GM10248 (cell line): ENCODE measurements at regions of chr6 and their contacts with region 1.

Region 1: DNA sequence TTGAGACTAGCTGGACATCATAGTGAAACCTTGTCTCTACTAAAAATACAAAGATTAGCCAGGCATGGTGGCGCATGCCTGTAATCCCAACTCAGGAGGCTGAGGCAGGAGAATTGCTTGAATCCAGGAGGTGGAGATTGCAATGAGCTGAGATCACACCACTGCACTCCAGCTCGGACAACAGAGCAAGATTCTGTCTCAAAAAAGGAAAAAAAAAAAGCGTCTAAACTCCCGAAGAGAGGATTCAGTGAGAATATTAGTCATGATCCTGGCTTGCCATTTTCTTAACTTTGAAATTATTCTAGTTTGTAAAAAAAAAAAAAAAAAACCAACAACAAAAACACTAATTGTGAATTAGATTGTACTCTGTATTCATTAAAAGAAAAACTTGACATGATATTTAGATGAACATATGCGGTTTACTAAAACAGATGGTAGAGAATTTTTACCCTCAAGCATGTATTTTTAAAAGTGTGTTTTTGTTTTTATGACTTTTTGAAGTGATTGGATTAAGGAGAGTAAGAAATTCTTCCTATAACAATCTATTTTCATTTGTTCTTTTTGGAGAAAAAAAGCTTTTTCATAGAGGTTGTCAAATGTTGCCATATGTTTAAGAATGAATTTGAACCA is 80.7 kb downstream of the UST start:
- DNase-seq: no peak
- CTCF ChIP-seq: no peak

Region 2: DNA sequence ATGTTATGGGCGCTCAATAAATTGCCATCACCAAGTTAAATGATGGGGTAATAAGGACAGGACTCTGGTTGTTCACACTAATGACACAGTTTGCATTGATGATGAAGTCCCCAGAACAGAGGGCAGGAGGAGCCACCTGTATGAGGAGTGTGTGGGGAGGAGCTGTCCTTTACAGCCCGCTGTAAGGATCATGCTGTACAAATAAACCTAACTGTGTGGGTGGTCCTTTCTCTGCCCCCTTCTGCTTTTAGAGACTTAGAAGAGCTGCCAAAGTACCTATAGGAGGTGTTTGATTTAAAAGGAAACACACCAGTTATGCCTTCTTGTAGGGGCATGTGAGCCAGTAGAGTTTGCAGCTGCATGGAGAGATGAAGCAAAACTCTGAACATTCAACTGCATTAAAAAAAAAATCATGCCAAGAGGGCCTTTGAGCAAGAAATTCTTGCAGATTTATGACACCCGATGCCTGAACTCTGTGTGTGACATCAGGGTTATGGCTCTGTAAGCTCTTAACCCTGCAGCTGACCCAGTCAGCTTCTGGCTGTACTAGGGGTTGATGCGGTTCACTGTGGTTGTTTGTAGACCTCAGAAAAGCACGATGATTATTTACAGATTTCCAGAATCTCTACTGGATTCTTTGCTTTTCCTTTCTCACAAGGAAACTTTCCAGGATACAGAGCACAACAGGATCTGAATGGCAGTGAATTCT is 13.3 kb before region 1 on chr6:
- CTCF ChIA-PET with region 1: interaction called, 10 read pairs
- POLR2A ChIA-PET with region 1: no interaction called
- DNase-seq: no peak
- CTCF ChIP-seq: no peak

Region 3: GRCh38 chr6:148846778-148847761 is 19.5 kb after region 1 on chr6:
- CTCF ChIA-PET with region 1: no interaction called
- POLR2A ChIA-PET with region 1: no interaction called
- DNase-seq: no peak
- CTCF ChIP-seq: no peak